Lower leg skin (tissue), 4 donors: ENCODE measurements at regions of chrX and their contacts with region 1.

Region 1: GRCh38 chrX:9102956-9103355 is 69.0 kb upstream of the FAM9B start:
- DNase-seq: no peak
- H3K4me3 ChIP-seq: no peak overlapping the region
- CTCF ChIP-seq: no peak
- POLR2A ChIP-seq: no peak

Region 2: GRCh38 chrX:9033179-9033578 is 69.8 kb before region 1 on chrX:
- intact Hi-C with region 1: loop called (anchors 10 kb)
- DNase-seq: no peak
- H3K4me3 ChIP-seq: no peak overlapping the region
- CTCF ChIP-seq: no peak
- POLR2A ChIP-seq: no peak